Calu3 (cell line): ENCODE measurements at regions of chr15 and their contacts with region 1.

Region 1: DNA sequence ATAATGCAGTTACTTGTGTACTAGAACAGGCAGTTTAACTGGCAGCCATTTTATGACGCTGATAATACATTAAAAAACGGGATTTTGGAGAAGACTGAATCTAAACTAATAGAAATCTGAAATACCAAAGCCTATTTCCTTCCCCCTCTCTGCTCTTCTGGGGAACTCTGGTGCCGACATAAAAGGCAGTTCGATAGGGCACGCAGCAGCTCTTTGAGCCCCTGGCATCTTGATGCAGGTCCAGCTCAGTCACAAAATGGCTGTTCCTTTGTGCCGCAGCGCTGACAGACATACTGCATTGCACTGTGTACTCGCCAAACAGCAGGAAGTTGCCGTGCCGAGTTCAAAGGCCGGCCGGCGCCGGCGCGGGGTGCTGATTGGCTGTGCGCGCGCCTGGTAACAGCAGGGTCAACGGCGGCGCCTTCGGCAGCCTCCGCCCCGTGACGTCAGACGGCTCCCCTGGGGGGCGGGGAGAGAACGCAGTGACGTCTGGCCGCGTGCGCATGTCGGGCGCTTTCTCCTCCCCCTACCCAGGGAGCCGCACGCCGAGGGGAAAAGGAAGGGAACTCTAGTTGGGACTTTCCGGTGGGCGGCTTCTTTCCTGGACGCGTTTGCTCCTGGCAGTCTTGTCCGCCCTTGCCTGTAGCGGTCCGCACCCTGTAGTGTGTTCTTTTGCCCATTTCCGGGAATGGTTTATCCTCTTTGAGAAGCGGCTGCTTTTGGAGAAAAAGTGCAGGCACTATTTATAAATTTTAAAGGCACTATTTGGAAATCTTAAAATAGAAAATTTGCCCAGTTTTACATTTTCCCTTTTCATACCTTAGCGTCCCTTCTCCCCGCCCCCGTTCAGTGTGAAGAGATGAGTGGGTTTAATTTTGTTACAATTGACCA is 4.1 kb downstream of the CHD2 start:
- DNase-seq: peak; percentile 100
- H3K4me3 Mint-ChIP-seq: peak overlapping the region; percentile 80
- H3K27ac Mint-ChIP-seq: peak overlapping the region; percentile 100
- H3K4me1 Mint-ChIP-seq: peaks cover 49% of the 10 kb centered on the region
- H3K27me3 Mint-ChIP-seq: no peaks in the 10 kb centered on the region
- CTCF ChIP-seq: no peak

Region 2: GRCh38 chr15:92797168-92797951 is 106.8 kb before region 1 on chr15:
- CTCF ChIA-PET with region 1: interaction called, 16 read pairs
- intact Hi-C with region 1: no loop called
- DNase-seq: peak; percentile 79
- H3K4me3 Mint-ChIP-seq: no peak overlapping the region
- H3K27ac Mint-ChIP-seq: peak overlapping the region; percentile 24
- H3K4me1 Mint-ChIP-seq: peaks cover 23% of the 10 kb centered on the region
- H3K27me3 Mint-ChIP-seq: no peaks in the 10 kb centered on the region
- CTCF ChIP-seq: peak; percentile 31

Region 3: DNA sequence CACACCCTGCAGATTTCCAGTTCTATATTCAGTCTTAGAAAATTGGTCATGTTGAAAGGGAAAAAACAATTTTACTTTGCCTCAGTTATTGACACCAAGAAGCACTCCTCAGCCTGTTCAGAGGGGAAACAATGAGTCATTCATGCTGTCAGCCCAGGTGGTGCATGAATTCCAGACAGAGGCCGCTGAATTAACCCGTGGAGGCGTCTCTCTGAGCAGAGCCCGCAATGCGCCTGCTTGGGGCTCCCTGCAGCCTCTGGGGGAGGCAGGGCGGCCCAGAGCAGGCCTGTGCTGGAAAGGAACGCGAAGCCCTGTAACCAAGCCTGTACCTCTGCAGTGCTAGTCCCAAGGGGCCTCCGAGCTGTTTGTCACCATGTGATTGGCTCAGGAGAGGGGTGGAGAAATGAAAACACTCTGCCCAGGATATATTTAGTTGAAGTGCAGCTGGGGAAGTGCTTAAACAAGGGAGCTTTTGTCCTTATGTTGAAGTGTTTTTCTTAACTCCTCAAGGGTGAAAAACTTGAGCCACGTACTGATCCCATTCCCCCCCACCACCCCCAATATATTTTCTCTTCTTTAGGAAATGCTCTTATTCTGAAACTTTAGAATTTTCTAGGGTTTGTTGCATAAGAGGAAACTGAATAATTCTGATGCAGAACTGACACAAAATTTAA is 72.4 kb before region 1 on chr15:
- CTCF ChIA-PET with region 1: interaction called, 13 read pairs
- intact Hi-C with region 1: no loop called
- DNase-seq: peak; percentile 96
- H3K4me3 Mint-ChIP-seq: peak overlapping the region; percentile 62
- H3K27ac Mint-ChIP-seq: peak overlapping the region; percentile 99
- H3K4me1 Mint-ChIP-seq: peaks cover 32% of the 10 kb centered on the region
- H3K27me3 Mint-ChIP-seq: no peaks in the 10 kb centered on the region
- CTCF ChIP-seq: no peak

Region 4: GRCh38 chr15:92845126-92845508 is 59.1 kb before region 1 on chr15:
- CTCF ChIA-PET with region 1: interaction called, 5 read pairs
- intact Hi-C with region 1: loop called (anchors 2 kb)
- DNase-seq: peak; percentile 36
- H3K4me3 Mint-ChIP-seq: peak overlapping the region; percentile 36
- H3K27ac Mint-ChIP-seq: peak overlapping the region; percentile 87
- H3K4me1 Mint-ChIP-seq: peaks cover 16% of the 10 kb centered on the region
- H3K27me3 Mint-ChIP-seq: no peaks in the 10 kb centered on the region
- CTCF ChIP-seq: no peak

Region 5: GRCh38 chr15:92864127-92864814 is 39.9 kb before region 1 on chr15:
- CTCF ChIA-PET with region 1: no interaction called
- intact Hi-C with region 1: no loop called
- DNase-seq: no peak
- H3K4me3 Mint-ChIP-seq: no peak overlapping the region
- H3K27ac Mint-ChIP-seq: no peak overlapping the region
- H3K4me1 Mint-ChIP-seq: peaks cover 5% of the 10 kb centered on the region
- H3K27me3 Mint-ChIP-seq: no peaks in the 10 kb centered on the region
- CTCF ChIP-seq: no peak

Region 6: GRCh38 chr15:92881802-92882696 is 22.1 kb before region 1 on chr15:
- CTCF ChIA-PET with region 1: interaction called, 24 read pairs
- intact Hi-C with region 1: loop called (anchors 2 kb)
- DNase-seq: peak; percentile 98
- H3K4me3 Mint-ChIP-seq: peak overlapping the region; percentile 68
- H3K27ac Mint-ChIP-seq: peak overlapping the region; percentile 94
- H3K4me1 Mint-ChIP-seq: peaks cover 47% of the 10 kb centered on the region
- H3K27me3 Mint-ChIP-seq: peaks cover 13% of the 10 kb centered on the region
- CTCF ChIP-seq: no peak

Region 7: DNA sequence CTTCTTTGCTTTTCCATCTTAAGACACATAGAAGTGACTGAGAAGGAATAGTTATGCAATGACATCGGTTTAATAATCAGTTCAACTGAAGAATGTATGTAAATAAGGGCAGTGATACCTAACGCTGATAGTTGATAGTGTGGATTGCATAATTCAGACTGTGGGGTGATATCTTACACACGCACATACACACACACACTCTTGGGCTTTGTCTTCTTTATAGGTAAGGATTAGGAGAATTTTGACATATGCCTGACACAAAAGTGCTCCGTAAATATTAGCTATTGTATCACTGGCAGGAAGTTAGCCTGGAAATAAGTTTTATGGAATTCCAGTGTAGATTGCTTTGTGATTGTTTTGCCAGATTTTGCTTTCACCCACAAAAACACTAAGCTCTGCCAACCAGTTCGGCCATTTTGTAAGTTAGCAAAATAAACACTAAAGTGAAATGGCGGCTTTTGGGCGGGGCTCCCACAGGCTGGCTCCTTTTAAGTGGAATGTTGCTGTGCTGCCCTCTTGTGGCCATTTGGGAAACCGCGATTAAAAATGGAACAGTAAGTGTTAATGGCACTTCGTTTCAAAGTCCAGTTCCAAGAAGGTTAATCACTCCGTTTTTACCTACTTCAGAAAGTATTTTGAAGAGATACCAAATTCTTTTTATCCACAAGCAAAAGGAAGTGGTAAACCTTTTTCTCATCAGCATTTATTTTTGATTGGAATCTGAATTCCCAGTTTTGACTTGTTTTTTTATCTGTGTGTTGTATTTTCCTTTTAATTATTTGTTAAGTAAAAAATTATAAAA is 13.6 kb after region 1 on chr15:
- CTCF ChIA-PET with region 1: interaction called, 13 read pairs
- intact Hi-C with region 1: loop called (anchors 1 kb)
- DNase-seq: peak; percentile 93
- H3K4me3 Mint-ChIP-seq: peak overlapping the region; percentile 59
- H3K27ac Mint-ChIP-seq: peak overlapping the region; percentile 85
- H3K4me1 Mint-ChIP-seq: peaks cover 78% of the 10 kb centered on the region
- H3K27me3 Mint-ChIP-seq: no peaks in the 10 kb centered on the region
- CTCF ChIP-seq: peak; percentile 81